Heart right ventricle (tissue), 16 donors: ENCODE measurements at regions of chr2 and their contacts with region 1.

Region 1: DNA sequence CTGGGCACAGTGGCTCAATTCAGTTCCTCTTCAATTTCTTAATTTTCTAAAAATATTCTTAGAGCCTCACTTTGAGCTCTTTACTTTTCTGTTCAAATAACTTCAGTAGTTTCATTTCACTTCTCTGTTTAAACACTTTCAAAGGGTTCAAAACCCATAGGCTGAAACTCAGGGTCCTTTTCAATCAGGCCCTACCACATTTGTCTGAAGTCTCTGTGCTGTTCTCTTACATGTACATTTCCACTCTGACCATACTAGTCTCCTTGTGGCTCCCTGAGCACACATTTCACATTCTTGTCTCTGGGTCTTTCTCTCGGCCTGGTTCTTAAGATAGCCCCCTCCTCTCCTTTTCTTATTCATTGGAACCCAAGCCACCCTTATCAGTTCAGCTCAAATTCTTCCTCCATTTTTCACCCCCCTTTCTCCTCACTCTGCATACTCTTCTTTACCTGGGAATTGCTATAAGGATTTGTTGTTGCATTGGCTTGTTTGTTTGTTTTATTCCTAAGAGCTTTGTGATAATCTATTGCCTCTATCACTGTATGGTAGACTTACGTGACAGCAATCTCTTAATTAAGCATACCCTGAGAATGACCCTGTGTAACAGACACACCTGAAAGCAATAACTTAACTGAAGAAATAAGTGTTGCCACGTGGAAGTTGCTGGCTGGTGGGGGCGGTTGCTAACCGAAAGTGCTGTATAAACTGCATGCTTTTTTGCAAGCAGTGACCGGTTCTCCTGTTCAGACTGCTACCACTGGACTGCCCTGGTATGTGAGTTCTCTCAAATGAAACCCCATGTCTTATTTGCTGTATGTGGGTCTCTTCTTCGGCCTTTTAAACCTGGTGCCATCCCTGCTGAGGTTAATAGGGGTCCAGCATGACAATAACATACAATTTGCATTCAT is 27.7 kb upstream of the ACADL start:
- DNase-seq: no peak
- ATAC-seq: no peak
- H3K4me3 ChIP-seq: no peak overlapping the region
- H3K27ac ChIP-seq: no peak overlapping the region
- H3K4me1 ChIP-seq: peaks cover 0 to 5% (median 0%) of the 10 kb centered on the region in 9 donors
- H3K27me3 ChIP-seq: no peaks in the 10 kb centered on the region
- CTCF ChIP-seq: no peak

Region 2: GRCh38 chr2:209682646-209683045 is 570.3 kb before region 1 on chr2:
- intact Hi-C with region 1: no loop called
- DNase-seq: no peak
- ATAC-seq: no peak
- H3K4me3 ChIP-seq: no peak overlapping the region
- H3K27ac ChIP-seq: no peak overlapping the region
- H3K4me1 ChIP-seq: peaks cover 0 to 22% (median 10%) of the 10 kb centered on the region in 9 donors
- H3K27me3 ChIP-seq: no peaks in the 10 kb centered on the region
- CTCF ChIP-seq: no peak

Region 3: DNA sequence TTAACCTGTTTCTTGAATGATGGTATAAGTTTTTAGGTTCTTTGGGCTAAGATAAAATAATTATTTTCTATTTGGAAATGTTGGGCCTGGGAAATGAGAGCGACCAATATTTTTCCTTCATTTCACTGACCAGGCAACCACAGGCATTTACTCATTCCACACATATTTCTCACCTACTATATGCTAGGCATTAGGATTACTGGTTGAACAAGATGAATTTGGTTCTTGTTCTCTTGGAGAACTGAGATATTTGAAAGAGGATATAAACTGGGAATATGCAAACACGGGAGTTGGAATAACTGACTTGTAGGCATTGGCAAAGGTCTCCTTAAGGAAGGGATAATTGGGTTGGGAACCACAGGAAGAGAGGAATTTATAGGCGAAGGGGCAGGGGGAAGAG is 65.9 kb after region 1 on chr2:
- intact Hi-C with region 1: no loop called
- DNase-seq: no peak
- ATAC-seq: no peak
- H3K4me3 ChIP-seq: no peak overlapping the region
- H3K27ac ChIP-seq: no peak overlapping the region
- H3K4me1 ChIP-seq: no peaks in the 10 kb centered on the region
- H3K27me3 ChIP-seq: no peaks in the 10 kb centered on the region
- CTCF ChIP-seq: no peak

Region 4: DNA sequence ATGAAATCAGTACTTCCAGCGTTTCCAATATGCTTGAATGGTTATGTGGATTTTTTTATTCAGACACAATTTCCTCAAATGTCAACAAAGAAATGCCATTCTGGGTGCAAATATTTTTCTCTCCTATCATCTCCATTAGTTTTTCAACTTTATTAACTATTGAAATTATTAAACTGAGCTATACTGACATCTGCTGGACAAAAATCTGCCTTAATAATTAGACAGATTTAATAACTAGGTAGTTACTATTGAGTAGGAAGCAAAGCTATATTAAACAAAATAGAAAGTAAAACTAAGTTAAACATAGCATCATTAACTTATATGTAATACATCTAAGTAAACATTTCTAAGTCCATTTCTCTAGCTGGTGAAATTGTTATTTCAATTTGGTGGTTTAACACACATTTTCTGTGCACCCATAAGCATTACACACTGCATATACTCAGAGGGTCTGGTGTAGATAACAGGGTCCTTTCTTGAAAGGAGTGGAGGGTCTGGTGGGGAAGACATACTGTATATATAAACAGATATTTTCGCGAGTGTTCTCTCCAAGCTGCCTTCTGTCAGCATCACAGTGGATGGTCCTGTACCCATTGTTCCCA is 146.6 kb after region 1 on chr2:
- intact Hi-C with region 1: loop called in 9 of 10 experiments (anchors 1 to 10 kb)
- DNase-seq: no peak
- ATAC-seq: no peak
- H3K4me3 ChIP-seq: no peak overlapping the region
- H3K27ac ChIP-seq: no peak overlapping the region
- H3K4me1 ChIP-seq: peaks cover 0 to 9% (median 0%) of the 10 kb centered on the region in 9 donors
- H3K27me3 ChIP-seq: no peaks in the 10 kb centered on the region
- CTCF ChIP-seq: peak in 8 of 9 donors; percentile 44 to 69 (median 52)